Prostate gland (tissue), 2 donors: ENCODE measurements at regions of chr12 and their contacts with region 1.

Region 1: GRCh38 chr12:123150744-123151456 is at the start of gene PITPNM2:
- DNase-seq: peak; percentile 43
- H3K4me3 ChIP-seq: peak within 1 kb of the TSS; percentile 70 to 73
- H3K27ac ChIP-seq: peak within 1 kb of the TSS; percentile 87 to 89
- H3K4me1 ChIP-seq: peaks cover 6% of the 10 kb centered on the region
- H3K27me3 ChIP-seq: no peaks in the 10 kb centered on the region
- CTCF ChIP-seq: peak in 1 of 4 experiments; percentile 48
- POLR2A ChIP-seq: no peak
- total RNA-seq, gene PITPNM2: 2.4 to 15.7 TPM

Region 2: DNA sequence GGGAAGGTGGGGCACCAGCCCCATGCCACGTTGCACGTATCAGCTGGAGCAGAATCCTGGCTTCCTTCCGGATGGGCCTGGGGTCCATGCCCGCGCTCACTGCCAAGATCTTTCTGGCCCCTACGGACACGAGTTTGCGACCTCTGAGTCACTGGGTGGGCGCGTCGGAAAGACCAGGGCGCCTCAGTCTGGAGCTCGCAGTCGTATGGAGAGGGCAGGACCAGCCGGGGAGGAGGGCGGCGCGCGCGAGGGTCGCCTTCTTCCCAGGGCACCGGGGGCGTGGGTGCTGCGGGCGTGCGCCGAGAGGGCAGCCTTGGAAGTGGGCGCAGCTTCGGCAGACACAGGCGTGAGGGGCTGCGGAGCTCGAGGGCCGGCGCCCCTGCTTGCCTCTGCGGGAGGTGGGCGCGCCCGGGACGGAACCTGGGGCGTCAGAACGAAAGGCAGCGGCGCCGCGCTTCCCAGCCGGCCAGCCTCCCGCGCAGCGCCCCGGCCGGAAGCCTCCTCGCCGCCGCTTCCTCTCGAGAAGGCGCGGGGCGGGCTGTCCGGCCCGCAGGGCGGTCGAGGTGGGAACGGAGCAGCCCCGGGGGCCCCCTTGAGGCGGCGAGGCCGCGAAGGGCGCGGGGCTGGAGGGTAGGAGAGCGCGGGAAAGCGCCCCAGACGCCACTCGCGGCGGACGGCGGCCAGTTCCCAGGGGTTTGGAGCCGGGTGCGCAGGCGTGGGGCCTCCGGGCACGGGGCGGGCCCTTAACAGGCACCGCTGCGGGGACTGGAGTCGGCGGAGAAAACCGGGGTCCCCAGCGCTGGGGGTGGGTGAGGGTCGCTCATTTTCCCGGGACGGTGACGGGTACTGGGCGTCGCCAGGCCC is 170.5 kb before region 1 on chr12 and contains the start of gene ARL6IP4:
- intact Hi-C with region 1: loop called (anchors 5 kb)
- DNase-seq: peak; percentile 48
- H3K4me3 ChIP-seq: peak within 1 kb of the TSS; percentile 95 to 97
- H3K27ac ChIP-seq: peak within 1 kb of the TSS; percentile 84 to 85
- H3K4me1 ChIP-seq: peaks cover 48% of the 10 kb centered on the region
- H3K27me3 ChIP-seq: no peaks in the 10 kb centered on the region
- CTCF ChIP-seq: peak in 2 of 4 experiments; percentile 14 to 17
- POLR2A ChIP-seq: peak; percentile 66
- total RNA-seq, gene ARL6IP4: 232 to 257 TPM

Region 3: GRCh38 chr12:123043536-123044001 is 107.3 kb before region 1 on chr12:
- intact Hi-C with region 1: loop called (anchors 1 kb)
- DNase-seq: peak; percentile 80
- H3K4me3 ChIP-seq: no peak overlapping the region
- H3K27ac ChIP-seq: no peak overlapping the region
- H3K4me1 ChIP-seq: peaks cover 7% of the 10 kb centered on the region
- H3K27me3 ChIP-seq: no peaks in the 10 kb centered on the region
- CTCF ChIP-seq: peak; percentile 15 to 83 (median 71)
- POLR2A ChIP-seq: no peak

Region 4: DNA sequence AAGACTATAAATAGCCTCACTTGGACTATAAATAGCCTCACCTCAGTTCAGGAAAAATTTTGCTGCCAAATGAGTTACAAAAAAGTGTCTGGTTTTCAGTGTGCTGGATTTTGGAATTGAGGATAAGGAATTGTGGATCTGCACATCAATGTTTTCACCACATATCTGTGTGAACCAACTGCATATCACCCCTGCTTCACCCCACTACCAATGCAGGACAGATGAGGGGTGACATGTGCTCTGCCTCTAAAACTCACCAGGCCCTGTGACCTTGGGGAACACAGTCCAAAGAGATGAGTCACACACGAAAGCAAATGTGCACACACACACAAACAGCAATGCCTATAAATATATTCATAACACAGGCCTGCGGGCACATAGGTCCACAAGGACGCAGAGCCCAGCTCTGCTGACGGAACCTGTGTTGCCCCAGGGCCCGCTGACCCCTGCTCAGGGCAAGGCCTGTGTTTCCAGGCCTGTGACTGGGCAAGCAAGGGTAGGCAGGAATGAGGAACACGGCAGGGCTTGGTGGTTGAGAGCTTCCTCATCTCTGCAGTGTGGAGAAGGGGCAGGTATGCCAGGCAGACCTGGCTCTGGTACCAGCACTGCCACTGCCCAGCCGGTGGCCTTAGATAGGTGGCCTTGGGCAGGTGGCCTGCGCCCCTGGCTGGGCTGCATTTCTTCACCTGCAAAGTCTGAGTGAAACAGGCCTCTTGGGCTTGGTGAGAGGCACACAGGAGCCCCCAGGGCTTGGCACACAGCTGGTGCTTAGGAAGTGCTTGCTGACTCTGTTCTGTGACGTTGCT is 88.0 kb before region 1 on chr12:
- intact Hi-C with region 1: no loop called
- DNase-seq: no peak
- H3K4me3 ChIP-seq: no peak overlapping the region
- H3K27ac ChIP-seq: peak overlapping the region in 1 of 2 donors; percentile 8
- H3K4me1 ChIP-seq: no peaks in the 10 kb centered on the region
- H3K27me3 ChIP-seq: no peaks in the 10 kb centered on the region
- CTCF ChIP-seq: no peak
- POLR2A ChIP-seq: no peak